ENCODE measurements at regions of chr20 and their contacts with region 1.

Region 1: DNA sequence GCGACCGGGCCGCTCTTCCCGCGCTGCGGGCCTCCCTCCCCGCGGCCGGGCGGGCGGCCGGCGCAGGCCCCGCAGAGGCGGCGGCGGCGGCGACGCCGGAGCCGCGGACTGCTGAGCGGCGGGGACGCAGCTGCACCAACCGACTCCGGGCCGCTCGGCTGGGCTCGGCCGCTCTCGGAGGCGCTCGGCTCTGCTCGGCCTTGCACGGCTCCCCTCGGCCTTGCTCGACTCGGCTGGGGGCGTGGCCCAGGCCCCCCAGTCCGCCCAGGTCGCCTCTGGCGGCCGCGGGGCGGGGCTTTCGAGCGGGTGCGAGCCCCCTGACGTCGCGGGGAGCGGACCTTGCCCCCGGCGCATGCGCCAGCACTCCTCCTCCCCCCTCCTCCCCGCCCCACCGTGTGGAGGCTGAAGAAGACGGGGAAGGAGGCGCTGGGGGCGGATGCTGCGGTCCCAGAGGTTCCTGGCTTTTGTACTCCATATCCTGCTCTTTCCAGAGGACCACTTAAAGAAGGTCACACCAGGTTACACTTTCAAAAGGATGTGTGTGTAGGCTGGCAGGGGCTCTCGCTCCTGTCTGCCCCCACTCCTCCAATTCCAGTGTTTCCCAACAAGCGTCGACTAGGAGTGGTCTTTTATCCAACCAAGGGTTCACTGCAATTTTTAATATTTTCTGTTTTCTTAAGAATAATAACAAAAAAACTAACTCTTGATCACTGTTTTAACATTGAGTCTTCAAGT is at the start of gene ZHX3:
- DNase-seq: peak; percentile 97
- total RNA-seq, gene ZHX3: 33.2 TPM

Region 2: DNA sequence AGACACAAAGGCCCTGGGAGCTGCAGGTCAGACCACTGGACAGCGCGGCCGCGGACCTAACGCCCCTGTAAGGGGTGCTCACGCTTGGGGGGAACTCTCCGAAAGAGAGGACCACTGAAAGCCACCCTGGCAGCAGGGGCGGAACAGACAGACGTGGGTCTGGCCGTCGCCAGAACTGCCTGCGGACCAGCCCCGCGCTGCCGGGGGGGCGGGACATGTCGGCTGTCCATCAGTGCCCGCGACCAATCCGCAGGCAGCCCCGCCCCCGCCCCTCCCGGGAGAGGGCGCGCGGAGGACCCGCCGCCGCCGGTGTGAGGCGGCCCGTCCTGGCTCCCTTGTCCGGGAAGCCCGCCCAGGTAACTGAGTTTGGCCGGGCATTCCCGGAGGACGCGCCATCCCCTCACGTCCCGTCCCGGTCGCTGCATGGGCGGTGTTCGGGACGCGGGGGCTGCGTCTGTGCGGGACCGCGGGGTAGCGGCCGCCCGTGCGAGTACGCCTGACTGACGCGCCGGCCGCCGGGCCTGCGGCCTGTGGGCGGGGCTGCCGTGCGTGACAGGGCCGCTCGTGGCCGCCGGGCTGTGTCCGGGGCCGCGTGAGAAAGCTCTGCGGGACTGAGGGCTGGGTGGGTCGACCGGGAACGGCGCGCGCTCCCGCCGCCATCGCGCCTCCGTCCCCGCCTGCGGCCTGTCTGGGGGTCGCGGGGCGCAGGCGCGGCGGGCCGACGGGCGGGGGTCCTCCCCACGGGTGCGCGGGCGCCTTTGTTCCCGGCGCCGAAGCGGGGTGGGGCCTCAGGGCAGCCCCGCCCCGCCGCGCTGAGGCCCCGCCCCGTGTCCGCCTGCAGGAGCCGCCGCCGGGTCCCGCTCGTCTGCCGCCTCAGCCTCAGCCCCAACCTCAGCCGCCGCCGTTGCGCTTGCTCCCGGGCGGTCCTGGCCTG is 180.8 kb before region 1 on chr20 and contains the start of gene PLCG1:
- intact Hi-C with region 1: loop called (anchors 5 kb)
- DNase-seq: peak; percentile 94
- total RNA-seq, gene PLCG1: 66.6 TPM

Region 3: DNA sequence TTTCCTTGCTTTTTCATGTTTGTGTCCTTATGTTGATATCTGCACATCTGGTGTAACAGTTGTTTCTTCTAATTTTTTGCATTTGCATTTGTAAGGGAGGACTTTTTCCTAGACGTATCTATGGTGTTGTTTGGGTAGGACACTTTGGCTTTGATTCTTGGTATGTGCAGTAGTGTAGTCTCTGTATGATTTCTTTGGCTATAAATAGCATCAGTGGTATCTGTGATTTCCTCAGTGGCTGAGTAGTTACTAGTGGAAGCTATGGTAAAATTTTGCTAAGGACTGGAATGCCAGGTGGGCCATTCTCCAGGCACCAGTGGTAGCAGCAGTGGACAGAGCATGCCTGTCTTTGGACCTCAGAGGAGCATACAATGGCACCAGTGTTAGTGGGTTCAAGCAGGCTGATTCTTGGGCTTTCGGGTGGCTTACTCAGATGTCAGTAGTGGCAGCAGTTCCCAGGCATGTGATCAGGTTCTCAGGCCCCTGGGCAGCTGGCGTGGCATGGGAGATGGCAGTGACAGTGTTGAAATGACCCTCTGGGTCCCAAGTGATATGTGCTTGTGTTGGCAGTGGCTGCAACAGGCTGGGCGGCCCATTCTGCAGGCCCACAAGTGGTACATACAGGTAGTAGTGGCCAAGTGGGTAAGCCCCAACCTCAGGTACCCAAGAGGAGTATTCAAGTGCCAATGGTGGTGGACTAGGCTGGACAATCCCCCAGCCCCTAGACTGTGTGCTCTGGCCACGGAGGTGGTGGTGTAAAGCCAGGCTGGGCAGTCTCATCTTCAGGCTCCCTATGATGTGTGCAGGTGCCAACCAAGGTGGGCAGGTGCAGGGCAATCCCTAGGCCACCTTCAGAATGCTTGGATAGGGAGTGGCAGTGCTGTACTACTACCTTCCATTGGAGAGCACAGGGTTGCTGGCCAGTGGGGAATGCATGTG is 125.9 kb before region 1 on chr20:
- intact Hi-C with region 1: no loop called
- DNase-seq: peak; percentile 36

Region 4: DNA sequence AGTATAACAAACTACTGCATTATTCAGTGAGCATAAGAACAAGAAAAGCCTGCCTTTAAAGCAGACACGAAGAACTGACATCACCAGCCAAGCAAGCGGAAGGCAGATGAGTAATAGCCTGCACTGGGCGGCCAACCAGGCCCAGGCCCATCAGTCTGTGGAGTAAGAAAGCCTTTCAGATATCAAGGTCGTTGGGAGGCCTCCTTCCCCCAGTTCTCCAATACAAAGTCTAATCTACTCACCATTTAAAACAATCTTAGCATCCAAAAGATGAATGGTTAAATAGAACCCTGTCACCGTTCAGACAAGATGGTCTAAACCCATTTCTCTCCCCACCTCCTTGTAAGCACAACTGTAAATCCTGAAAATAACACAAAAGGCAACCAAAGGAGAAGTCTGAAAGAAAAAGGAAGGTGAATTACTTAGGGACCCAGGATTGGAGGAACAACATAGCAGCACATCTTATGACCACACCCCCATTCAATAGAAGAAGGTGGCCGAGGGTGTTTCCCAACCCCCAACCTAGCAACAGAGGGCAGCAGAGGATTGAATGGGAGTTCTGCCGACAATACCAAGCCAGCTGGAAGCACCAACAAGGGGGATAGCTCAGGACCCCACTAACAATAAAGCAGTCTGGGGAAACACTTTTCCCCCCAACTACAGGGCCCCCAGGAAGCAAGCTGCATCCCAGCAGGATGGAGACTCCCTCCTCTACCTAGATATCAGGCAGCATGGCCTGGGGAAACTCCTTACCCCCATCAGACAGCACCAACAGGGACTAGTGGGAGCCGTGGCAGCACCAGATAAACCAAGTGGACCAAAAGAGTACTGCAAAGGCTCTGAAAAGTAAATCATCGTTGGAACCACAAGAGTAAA is 68.1 kb before region 1 on chr20:
- intact Hi-C with region 1: loop called (anchors 5 kb)
- DNase-seq: peak; percentile 82

Measured in cardiac septum (tissue), 1 donor.